HCT116 (cell line): ENCODE measurements at regions of chr17 and their contacts with region 1.

Region 1: DNA sequence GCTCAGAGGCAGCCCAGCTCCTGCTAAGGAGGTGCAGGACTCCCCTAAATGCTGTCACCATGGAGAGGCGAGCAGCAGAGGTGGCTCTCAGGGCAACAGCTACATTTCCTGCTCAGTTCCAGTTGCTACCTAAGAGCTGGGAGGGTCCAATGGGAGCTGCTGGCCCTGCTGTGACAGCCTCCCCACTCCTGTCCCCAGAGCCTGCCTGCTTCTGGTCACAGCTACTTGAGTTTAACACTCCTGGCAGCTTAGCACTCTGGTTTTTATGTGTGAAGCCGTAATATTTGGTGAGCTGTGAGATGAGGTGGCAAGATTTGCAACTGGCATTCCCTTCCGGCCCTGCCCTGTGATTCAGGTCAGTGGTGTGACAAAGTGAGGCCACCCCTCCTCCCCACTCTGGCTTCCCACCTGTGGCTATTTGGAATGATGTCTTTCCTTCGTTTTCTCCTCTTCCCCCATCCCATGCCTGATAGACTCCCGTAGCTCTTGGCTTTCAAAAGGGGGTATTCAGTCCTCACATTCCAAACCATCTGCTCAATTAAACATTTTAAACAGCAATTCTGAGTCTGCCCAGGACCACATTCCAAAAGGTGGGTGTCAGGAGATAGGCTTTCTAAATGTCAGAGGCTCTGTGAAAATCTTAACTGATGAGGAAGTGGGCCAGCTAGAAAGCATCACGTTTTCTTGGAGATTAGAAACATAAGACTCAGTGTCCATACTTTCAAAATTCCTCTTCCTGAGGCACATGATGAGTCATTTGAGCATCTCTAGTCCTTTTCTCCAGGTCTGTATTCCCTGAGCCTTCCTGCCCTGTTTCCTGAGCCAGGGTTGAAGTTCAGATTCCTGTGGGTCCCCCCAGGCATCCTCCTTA is 42.6 kb upstream of the SKAP1 start:
- DNase-seq: peak; percentile 60
- ATAC-seq: peak; percentile 70
- H3K4me3 ChIP-seq: peak overlapping the region in 1 of 2 experiments; percentile 25; a peak in 3 of 4 replicates
- H3K27ac ChIP-seq: peak overlapping the region; percentile 74
- H3K4me1 ChIP-seq: peaks cover 24 to 37% of the 10 kb centered on the region in 2 experiments
- H3K27me3 ChIP-seq: no peaks in the 10 kb centered on the region
- CTCF ChIP-seq: no peak
- POLR2A ChIP-seq: no peak
- RAD21 ChIP-seq: no peak; the same call in 1 of the 2 replicates

Region 2: DNA sequence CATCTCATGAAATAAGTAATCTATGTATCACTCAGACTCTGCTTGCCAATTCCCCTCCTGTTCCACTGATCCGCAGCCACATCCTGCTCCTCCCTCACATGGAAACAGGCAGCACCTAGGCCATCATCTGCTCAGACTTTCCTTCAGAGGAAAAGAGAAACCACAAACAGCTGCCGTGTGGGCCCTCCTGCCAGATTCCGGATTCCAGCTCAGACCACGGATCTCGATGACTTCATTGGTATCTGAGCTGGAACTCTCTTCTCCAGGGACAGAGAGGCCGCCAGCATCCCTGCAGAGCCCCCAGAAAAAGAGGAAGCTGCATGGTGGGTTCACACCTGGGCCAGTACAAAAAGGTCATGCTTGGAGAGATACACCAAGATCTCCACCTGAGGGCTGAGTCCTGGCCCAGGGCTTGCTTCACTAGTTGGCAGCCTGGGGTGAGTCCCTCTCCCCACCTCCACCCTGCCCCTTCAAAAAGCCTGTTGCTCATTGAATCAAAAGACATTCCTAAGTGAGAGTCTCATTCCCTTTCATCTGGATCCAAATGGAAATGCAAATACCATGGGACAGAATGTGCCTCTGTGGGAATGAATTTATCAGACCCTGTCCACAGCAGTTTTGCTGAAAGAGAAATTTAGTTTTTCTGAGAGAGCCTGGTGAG is 11.0 kb after region 1 on chr17:
- CTCF ChIA-PET with region 1: interaction called, 4 read pairs
- POLR2A ChIA-PET with region 1: interaction called, 12 read pairs
- RAD21 ChIA-PET with region 1: interaction called in 1 of 2 experiments, 3 read pairs
- intact Hi-C with region 1: no loop called
- DNase-seq: peak; percentile 95
- ATAC-seq: peak; percentile 77
- H3K4me3 ChIP-seq: peak overlapping the region; percentile 8 to 32; a peak in 3 of 4 replicates
- H3K27ac ChIP-seq: peak overlapping the region; percentile 83
- H3K4me1 ChIP-seq: peaks cover 57 to 79% of the 10 kb centered on the region in 2 experiments
- H3K27me3 ChIP-seq: no peaks in the 10 kb centered on the region
- CTCF ChIP-seq: no peak
- POLR2A ChIP-seq: no peak
- RAD21 ChIP-seq: peak; percentile 2